ENCODE measurements at regions of chr7 and their contacts with region 1.

Region 1: GRCh38 chr7:134432296-134433152 is 26.4 kb downstream of the AKR1B1 start:
- DNase-seq: peak; percentile 69
- ATAC-seq: peak; percentile 98
- H3K4me3 ChIP-seq: peak overlapping the region; percentile 65; the same call in 1 of the 2 replicates
- H3K27ac ChIP-seq: no peak overlapping the region
- H3K4me1 ChIP-seq: peaks cover 5% of the 10 kb centered on the region
- H3K27me3 ChIP-seq: no peaks in the 10 kb centered on the region
- CTCF ChIP-seq: peak; percentile 53 to 91 (median 73)
- EP300 ChIP-seq: no peak
- POLR2A ChIP-seq: no peak
- RAD21 ChIP-seq: peak; percentile 95

Region 2: DNA sequence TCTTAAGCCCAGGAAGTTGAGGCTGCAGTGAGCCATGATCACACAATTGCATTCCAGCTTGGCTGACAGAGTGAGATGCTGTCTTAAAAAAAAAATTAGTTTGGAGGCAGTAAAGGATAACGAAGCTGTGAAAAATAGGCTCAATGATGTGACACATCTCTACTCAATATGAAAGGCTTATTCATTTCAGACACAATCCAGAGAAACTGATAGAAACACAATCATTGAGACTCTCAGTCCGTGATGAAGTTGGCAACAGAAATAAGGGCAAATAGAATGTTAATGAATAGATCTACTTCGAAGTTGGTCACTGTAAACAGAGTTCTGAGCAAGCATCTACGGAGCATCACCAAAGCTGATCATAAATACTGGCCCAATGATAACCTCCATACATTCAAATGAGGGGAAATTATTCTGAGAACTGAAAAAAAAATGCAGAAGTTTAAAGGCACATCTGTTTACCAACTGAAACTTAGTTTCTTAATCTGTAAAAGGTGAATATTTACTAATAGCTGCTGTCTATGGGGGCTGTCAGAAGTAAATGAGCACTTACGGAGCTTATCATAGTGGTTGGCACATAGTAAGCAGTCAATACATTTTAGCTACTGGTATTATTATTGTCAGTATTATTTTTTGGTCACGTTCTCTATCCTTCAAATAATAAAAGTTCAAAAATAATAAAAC is 44.0 kb before region 1 on chr7:
- CTCF ChIA-PET with region 1: no interaction called
- POLR2A ChIA-PET with region 1: no interaction called
- RAD21 ChIA-PET with region 1: no interaction called
- SMC1A ChIA-PET with region 1: no interaction called
- in situ Hi-C with region 1: no loop called
- intact Hi-C with region 1: no loop called
- DNase-seq: no peak
- ATAC-seq: no peak; the same call in 2 of the 3 replicates
- H3K4me3 ChIP-seq: no peak overlapping the region
- H3K27ac ChIP-seq: no peak overlapping the region
- H3K4me1 ChIP-seq: no peaks in the 10 kb centered on the region
- H3K27me3 ChIP-seq: no peaks in the 10 kb centered on the region
- CTCF ChIP-seq: no peak
- EP300 ChIP-seq: no peak
- POLR2A ChIP-seq: no peak
- RAD21 ChIP-seq: no peak

Region 3: DNA sequence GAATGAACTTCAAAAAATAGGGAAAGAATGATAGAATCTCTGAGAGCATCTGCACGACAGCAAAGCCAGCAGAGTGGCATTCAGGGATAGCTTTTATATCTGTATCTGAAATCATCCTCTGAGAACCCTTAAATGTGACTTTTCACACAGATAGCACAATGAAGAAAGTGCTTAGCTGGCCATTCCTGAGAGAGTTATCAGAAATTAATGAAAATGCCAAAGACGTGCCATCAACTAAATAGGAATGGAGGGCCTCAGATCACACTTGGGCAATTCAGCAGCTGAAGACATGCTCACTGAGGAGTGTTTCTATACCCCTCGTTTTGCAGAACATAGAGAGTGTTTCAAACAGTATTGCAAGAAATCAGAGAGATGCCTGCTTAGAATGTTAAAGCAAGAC is 25.2 kb before region 1 on chr7:
- CTCF ChIA-PET with region 1: no interaction called
- POLR2A ChIA-PET with region 1: no interaction called
- RAD21 ChIA-PET with region 1: no interaction called
- SMC1A ChIA-PET with region 1: no interaction called
- in situ Hi-C with region 1: no loop called
- intact Hi-C with region 1: no loop called
- DNase-seq: no peak
- ATAC-seq: no peak
- H3K4me3 ChIP-seq: no peak overlapping the region
- H3K27ac ChIP-seq: no peak overlapping the region
- H3K4me1 ChIP-seq: no peaks in the 10 kb centered on the region
- H3K27me3 ChIP-seq: no peaks in the 10 kb centered on the region
- CTCF ChIP-seq: no peak
- EP300 ChIP-seq: no peak
- POLR2A ChIP-seq: no peak
- RAD21 ChIP-seq: no peak

Region 4: GRCh38 chr7:134443396-134444070 is 11.0 kb after region 1 on chr7:
- CTCF ChIA-PET with region 1: interaction called, 14 read pairs
- POLR2A ChIA-PET with region 1: no interaction called
- RAD21 ChIA-PET with region 1: interaction called, 6 read pairs
- SMC1A ChIA-PET with region 1: interaction called, 5 read pairs
- in situ Hi-C with region 1: no loop called
- intact Hi-C with region 1: no loop called
- DNase-seq: no peak
- ATAC-seq: no peak
- H3K4me3 ChIP-seq: no peak overlapping the region
- H3K27ac ChIP-seq: no peak overlapping the region
- H3K4me1 ChIP-seq: no peaks in the 10 kb centered on the region
- H3K27me3 ChIP-seq: no peaks in the 10 kb centered on the region
- CTCF ChIP-seq: no peak
- EP300 ChIP-seq: no peak
- POLR2A ChIP-seq: no peak
- RAD21 ChIP-seq: no peak

Region 5: GRCh38 chr7:134505856-134506255 is 73.3 kb after region 1 on chr7:
- CTCF ChIA-PET with region 1: interaction called, 129 read pairs
- POLR2A ChIA-PET with region 1: interaction called, 5 read pairs
- RAD21 ChIA-PET with region 1: interaction called, 19 read pairs
- SMC1A ChIA-PET with region 1: interaction called, 75 read pairs
- in situ Hi-C with region 1: loop called (anchors 5 kb)
- intact Hi-C with region 1: no loop called
- DNase-seq: no peak
- ATAC-seq: no peak
- H3K4me3 ChIP-seq: no peak overlapping the region
- H3K27ac ChIP-seq: no peak overlapping the region
- H3K4me1 ChIP-seq: no peaks in the 10 kb centered on the region
- H3K27me3 ChIP-seq: no peaks in the 10 kb centered on the region; a peak in 1 of 4 replicates
- CTCF ChIP-seq: no peak
- EP300 ChIP-seq: no peak
- POLR2A ChIP-seq: no peak
- RAD21 ChIP-seq: no peak

Region 6: GRCh38 chr7:134553976-134554375 is 121.5 kb after region 1 on chr7:
- CTCF ChIA-PET with region 1: interaction called, 50 read pairs
- POLR2A ChIA-PET with region 1: interaction called, 10 read pairs
- RAD21 ChIA-PET with region 1: interaction called, 30 read pairs
- SMC1A ChIA-PET with region 1: interaction called, 26 read pairs
- in situ Hi-C with region 1: no loop called
- intact Hi-C with region 1: no loop called
- DNase-seq: no peak
- ATAC-seq: peak; percentile 54
- H3K4me3 ChIP-seq: no peak overlapping the region
- H3K27ac ChIP-seq: no peak overlapping the region
- H3K4me1 ChIP-seq: peaks cover 12% of the 10 kb centered on the region
- H3K27me3 ChIP-seq: no peaks in the 10 kb centered on the region
- CTCF ChIP-seq: peak; percentile 36 to 43 (median 38); a peak in 3 of 6 replicates
- EP300 ChIP-seq: no peak
- POLR2A ChIP-seq: no peak
- RAD21 ChIP-seq: peak; percentile 61

Region 7: GRCh38 chr7:134613623-134614347 is 181.3 kb after region 1 on chr7:
- CTCF ChIA-PET with region 1: interaction called, 81 read pairs
- POLR2A ChIA-PET with region 1: no interaction called
- RAD21 ChIA-PET with region 1: interaction called, 5 read pairs
- SMC1A ChIA-PET with region 1: interaction called, 62 read pairs
- in situ Hi-C with region 1: no loop called
- intact Hi-C with region 1: no loop called
- DNase-seq: no peak
- ATAC-seq: no peak
- H3K4me3 ChIP-seq: no peak overlapping the region
- H3K27ac ChIP-seq: no peak overlapping the region
- H3K4me1 ChIP-seq: no peaks in the 10 kb centered on the region
- H3K27me3 ChIP-seq: peaks cover 0 to 3% of the 10 kb centered on the region in 2 experiments; a peak in 1 of 4 replicates
- CTCF ChIP-seq: no peak
- EP300 ChIP-seq: no peak
- POLR2A ChIP-seq: no peak
- RAD21 ChIP-seq: no peak

Region 8: GRCh38 chr7:135001390-135002165 is 569.1 kb after region 1 on chr7:
- CTCF ChIA-PET with region 1: no interaction called
- POLR2A ChIA-PET with region 1: no interaction called
- RAD21 ChIA-PET with region 1: no interaction called
- SMC1A ChIA-PET with region 1: no interaction called
- in situ Hi-C with region 1: no loop called
- intact Hi-C with region 1: no loop called
- DNase-seq: no peak
- ATAC-seq: no peak
- H3K4me3 ChIP-seq: no peak overlapping the region
- H3K27ac ChIP-seq: no peak overlapping the region
- H3K4me1 ChIP-seq: peaks cover 8% of the 10 kb centered on the region
- H3K27me3 ChIP-seq: no peaks in the 10 kb centered on the region
- CTCF ChIP-seq: no peak
- EP300 ChIP-seq: no peak
- POLR2A ChIP-seq: no peak
- RAD21 ChIP-seq: no peak